Activated T-helper 2 cell treated with anti-CD3 and anti-CD28 coated beads, Interferon-gamma antibody, Interleukin-2, Interleukin-4, amounts not matched to agents 10 μg/mL and 5 μg/mL and 100 μg/mL, durations not matched to agents 14 hours and 24 hours and 36 hours (primary cell): ENCODE measurements at regions of chr11 and their contacts with region 1.

Region 1: GRCh38 chr11:65180877-65181568 is 705 bp upstream of the CAPN1 start:
- DNase-seq: peak; percentile 61
- H3K4me3 Mint-ChIP-seq: peak overlapping the region; percentile 86
- H3K27ac Mint-ChIP-seq: peak overlapping the region; percentile 76
- H3K4me1 Mint-ChIP-seq: peaks cover 12% of the 10 kb centered on the region
- H3K27me3 Mint-ChIP-seq: peaks cover 2% of the 10 kb centered on the region

Region 2: GRCh38 chr11:65117216-65118096 is 63.6 kb before region 1 on chr11 and contains the start of gene ZNHIT2:
- intact Hi-C with region 1: loop called (anchors 1 kb)
- DNase-seq: peak; percentile 100
- H3K4me3 Mint-ChIP-seq: peak within 1 kb of the TSS; percentile 84
- H3K27ac Mint-ChIP-seq: peak within 1 kb of the TSS; percentile 88
- H3K4me1 Mint-ChIP-seq: peaks cover 28% of the 10 kb centered on the region
- H3K27me3 Mint-ChIP-seq: no peaks in the 10 kb centered on the region
- total RNA-seq, gene ZNHIT2: 11.3 and 12.8 TPM in 2 replicates

Region 3: GRCh38 chr11:65150509-65151271 is 30.3 kb before region 1 on chr11:
- intact Hi-C with region 1: no loop called
- DNase-seq: no peak
- H3K4me3 Mint-ChIP-seq: no peak overlapping the region
- H3K27ac Mint-ChIP-seq: no peak overlapping the region
- H3K4me1 Mint-ChIP-seq: peaks cover 13% of the 10 kb centered on the region
- H3K27me3 Mint-ChIP-seq: peaks cover 6% of the 10 kb centered on the region